Prostate gland (tissue), 2 donors: ENCODE measurements at regions of chr1 and their contacts with region 1.

Region 1: GRCh38 chr1:20100632-20101355 is 18.5 kb downstream of the PLA2G2D start:
- DNase-seq: peak; percentile 21
- H3K4me3 ChIP-seq: no peak overlapping the region
- H3K27ac ChIP-seq: no peak overlapping the region
- H3K4me1 ChIP-seq: peaks cover 9% of the 10 kb centered on the region
- H3K27me3 ChIP-seq: no peaks in the 10 kb centered on the region
- CTCF ChIP-seq: peak in 3 of 4 experiments; percentile 69 to 86 (median 81)
- POLR2A ChIP-seq: no peak

Region 2: DNA sequence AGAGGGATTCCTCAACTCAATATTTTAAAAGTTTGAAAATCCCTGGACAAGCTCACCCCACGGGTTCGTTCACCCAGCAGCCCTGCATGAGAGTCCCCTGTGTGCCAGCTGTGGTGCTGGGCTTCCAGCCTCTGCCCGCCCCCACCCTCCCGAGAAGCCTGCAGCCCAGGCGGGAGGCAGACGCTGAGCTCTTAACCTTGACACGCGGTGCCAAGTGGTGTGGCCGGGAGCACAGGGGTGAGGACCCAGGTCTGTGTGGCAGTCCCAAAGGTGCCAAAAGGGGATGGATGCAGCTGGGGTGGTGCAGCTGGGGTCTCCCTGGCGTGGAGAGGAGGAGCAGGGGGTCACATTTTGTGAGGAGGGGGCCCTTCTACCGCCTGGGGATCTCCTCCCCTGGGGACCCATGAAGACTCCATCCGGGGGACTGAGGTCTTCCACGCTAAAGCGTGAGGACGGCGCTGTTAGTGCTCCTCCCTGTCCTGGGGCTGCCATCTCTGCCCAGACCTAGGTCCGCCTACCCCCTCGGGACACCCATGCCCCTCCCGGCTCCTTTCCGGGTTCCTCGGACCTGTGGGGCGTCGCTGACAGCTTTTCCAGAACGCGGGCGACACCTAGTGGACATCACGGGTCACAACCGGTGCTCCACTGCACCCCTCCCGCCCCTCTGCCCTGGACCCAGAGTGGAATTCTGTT is 51.3 kb after region 1 on chr1:
- intact Hi-C with region 1: loop called (anchors 5 kb)
- DNase-seq: peak; percentile 59
- H3K4me3 ChIP-seq: peak overlapping the region; percentile 11 to 29
- H3K27ac ChIP-seq: peak overlapping the region in 1 of 2 donors; percentile 30
- H3K4me1 ChIP-seq: no peaks in the 10 kb centered on the region
- H3K27me3 ChIP-seq: no peaks in the 10 kb centered on the region
- CTCF ChIP-seq: peak; percentile 86 to 96 (median 92)
- POLR2A ChIP-seq: no peak

Region 3: GRCh38 chr1:20302093-20302471 is 201.3 kb after region 1 on chr1:
- intact Hi-C with region 1: no loop called
- DNase-seq: no peak
- H3K4me3 ChIP-seq: no peak overlapping the region
- H3K27ac ChIP-seq: no peak overlapping the region
- H3K4me1 ChIP-seq: no peaks in the 10 kb centered on the region
- H3K27me3 ChIP-seq: no peaks in the 10 kb centered on the region
- CTCF ChIP-seq: no peak
- POLR2A ChIP-seq: no peak